Heart left ventricle (tissue), 16 donors: ENCODE measurements at regions of chr20 and their contacts with region 1.

Region 1: GRCh38 chr20:23361598-23362384 is at the start of gene GZF1:
- DNase-seq: peak; percentile 98 to 99 (median 99)
- ATAC-seq: peak; percentile 82 to 93 (median 86)
- H3K4me3 ChIP-seq: peak within 1 kb of the TSS; percentile 69 to 94 (median 86)
- H3K27ac ChIP-seq: peak within 1 kb of the TSS; percentile 95 to 100 (median 100)
- H3K4me1 ChIP-seq: peaks cover 3 to 77% (median 56%) of the 10 kb centered on the region in 12 donors
- H3K27me3 ChIP-seq: no peaks in the 10 kb centered on the region
- CTCF ChIP-seq: peak in 7 of 12 donors; percentile 5 to 23 (median 15)
- POLR2A ChIP-seq: peak; percentile 87 to 89
- total RNA-seq, gene GZF1: 16.5 to 34.6 (median 27.9) TPM

Region 2: DNA sequence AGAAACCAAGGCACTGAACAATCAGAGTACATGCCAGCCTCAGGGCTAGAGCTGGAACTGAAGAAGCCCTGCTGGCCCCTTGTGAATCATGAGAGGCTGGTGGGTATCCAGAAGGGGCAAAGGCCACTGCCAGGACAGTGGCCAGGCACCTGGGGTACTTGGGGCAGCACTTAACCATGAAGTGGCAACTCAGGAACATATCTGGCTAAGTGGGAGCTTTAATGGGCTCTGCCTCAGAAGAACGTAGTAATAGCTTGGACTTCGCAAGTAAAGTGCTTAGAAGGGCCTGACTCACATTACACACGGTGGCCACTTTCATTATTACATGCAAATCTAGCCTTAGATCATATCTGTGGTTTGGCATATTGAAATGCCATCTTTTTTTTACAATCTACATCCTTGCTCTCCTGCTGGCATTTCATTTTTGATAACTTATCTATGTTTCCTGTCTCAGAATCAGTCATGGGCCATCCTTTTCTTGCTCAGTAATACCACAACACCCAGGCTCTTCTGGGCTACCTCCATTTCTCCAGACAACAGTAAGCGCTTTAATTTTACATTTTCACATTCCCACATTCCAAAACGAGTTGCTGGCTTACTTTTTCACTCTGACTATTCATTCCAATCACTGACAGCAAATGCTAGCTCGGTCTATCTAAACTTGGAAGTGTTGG is 37.9 kb after region 1 on chr20:
- intact Hi-C with region 1: loop called in 1 of 10 experiments (anchors 5 kb)
- DNase-seq: no peak
- ATAC-seq: no peak
- H3K4me3 ChIP-seq: no peak overlapping the region
- H3K27ac ChIP-seq: no peak overlapping the region
- H3K4me1 ChIP-seq: peaks cover 0 to 58% (median 33%) of the 10 kb centered on the region in 12 donors
- H3K27me3 ChIP-seq: no peaks in the 10 kb centered on the region
- CTCF ChIP-seq: no peak
- POLR2A ChIP-seq: no peak

Region 3: GRCh38 chr20:23412026-23412425 is 50.2 kb after region 1 on chr20:
- intact Hi-C with region 1: loop called in 5 of 10 experiments (anchors 2 to 10 kb)
- DNase-seq: no peak
- ATAC-seq: peak; percentile 61 to 81 (median 70)
- H3K4me3 ChIP-seq: no peak overlapping the region
- H3K27ac ChIP-seq: peak overlapping the region in 5 of 12 donors; percentile 2 to 36 (median 32)
- H3K4me1 ChIP-seq: peaks cover 0 to 65% (median 28%) of the 10 kb centered on the region in 12 donors
- H3K27me3 ChIP-seq: no peaks in the 10 kb centered on the region
- CTCF ChIP-seq: no peak
- POLR2A ChIP-seq: no peak

Region 4: GRCh38 chr20:23420943-23421931 is 59.4 kb after region 1 on chr20 and contains the start of gene NAPB:
- intact Hi-C with region 1: loop called in 9 of 10 experiments (anchors 2 to 10 kb)
- DNase-seq: peak; percentile 96 to 98 (median 97)
- ATAC-seq: peak; percentile 98 to 100 (median 99)
- H3K4me3 ChIP-seq: peak within 1 kb of the TSS; percentile 73 to 98 (median 88)
- H3K27ac ChIP-seq: peak within 1 kb of the TSS; percentile 70 to 92 (median 90)
- H3K4me1 ChIP-seq: peaks cover 0 to 44% (median 24%) of the 10 kb centered on the region in 12 donors
- H3K27me3 ChIP-seq: peaks cover 0 to 2% (median 0%) of the 10 kb centered on the region in 9 donors
- CTCF ChIP-seq: peak; percentile 48 to 73 (median 57)
- POLR2A ChIP-seq: peak; percentile 62 to 95
- total RNA-seq, gene NAPB: 2.8 to 8.4 (median 4.7) TPM

Region 5: DNA sequence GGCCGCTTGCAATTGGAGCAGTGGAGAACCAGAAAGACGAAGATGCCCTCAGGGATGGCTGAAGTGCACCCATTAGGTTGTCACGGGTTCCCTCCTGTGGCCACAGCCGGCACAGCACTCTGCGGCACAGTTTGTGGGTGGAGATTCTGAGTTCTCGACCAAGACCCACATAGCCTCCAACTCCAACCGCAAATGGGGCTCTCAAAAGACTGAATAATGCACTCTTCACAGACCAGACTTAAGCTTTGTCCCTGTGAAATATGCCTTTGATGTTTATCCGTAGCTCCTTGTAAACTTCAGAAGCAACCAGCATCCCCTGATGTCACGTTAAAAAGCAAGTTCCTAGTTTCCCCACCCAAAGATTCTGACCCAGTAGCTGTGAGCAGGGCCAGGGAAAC is 244.9 kb after region 1 on chr20:
- intact Hi-C with region 1: loop called in 3 of 10 experiments (anchors 5 to 10 kb)
- DNase-seq: peak; percentile 69 to 88 (median 77)
- ATAC-seq: peak; percentile 71 to 95 (median 90)
- H3K4me3 ChIP-seq: no peak overlapping the region
- H3K27ac ChIP-seq: no peak overlapping the region
- H3K4me1 ChIP-seq: peaks cover 0 to 13% (median 0%) of the 10 kb centered on the region in 12 donors
- H3K27me3 ChIP-seq: peaks cover 0 to 8% (median 0%) of the 10 kb centered on the region in 9 donors
- CTCF ChIP-seq: peak; percentile 71 to 92 (median 88)
- POLR2A ChIP-seq: no peak

Region 6: GRCh38 chr20:23637282-23638221 is 275.8 kb after region 1 on chr20 and contains the start of gene CST3:
- intact Hi-C with region 1: loop called in 1 of 10 experiments (anchors 5 kb)
- DNase-seq: peak; percentile 93 to 95 (median 95)
- ATAC-seq: peak; percentile 64 to 89 (median 87)
- H3K4me3 ChIP-seq: peak within 1 kb of the TSS; percentile 59 to 100 (median 90)
- H3K27ac ChIP-seq: peak within 1 kb of the TSS; percentile 87 to 100 (median 96)
- H3K4me1 ChIP-seq: peaks cover 0 to 80% (median 36%) of the 10 kb centered on the region in 12 donors
- H3K27me3 ChIP-seq: no peaks in the 10 kb centered on the region
- CTCF ChIP-seq: peak in 3 of 12 donors; percentile 6 to 23 (median 22)
- POLR2A ChIP-seq: peak; percentile 47 to 94
- total RNA-seq, gene CST3: 482 to 1,194 (median 708) TPM